ENCODE measurements at regions of chr9 and their contacts with region 1.

Region 1: DNA sequence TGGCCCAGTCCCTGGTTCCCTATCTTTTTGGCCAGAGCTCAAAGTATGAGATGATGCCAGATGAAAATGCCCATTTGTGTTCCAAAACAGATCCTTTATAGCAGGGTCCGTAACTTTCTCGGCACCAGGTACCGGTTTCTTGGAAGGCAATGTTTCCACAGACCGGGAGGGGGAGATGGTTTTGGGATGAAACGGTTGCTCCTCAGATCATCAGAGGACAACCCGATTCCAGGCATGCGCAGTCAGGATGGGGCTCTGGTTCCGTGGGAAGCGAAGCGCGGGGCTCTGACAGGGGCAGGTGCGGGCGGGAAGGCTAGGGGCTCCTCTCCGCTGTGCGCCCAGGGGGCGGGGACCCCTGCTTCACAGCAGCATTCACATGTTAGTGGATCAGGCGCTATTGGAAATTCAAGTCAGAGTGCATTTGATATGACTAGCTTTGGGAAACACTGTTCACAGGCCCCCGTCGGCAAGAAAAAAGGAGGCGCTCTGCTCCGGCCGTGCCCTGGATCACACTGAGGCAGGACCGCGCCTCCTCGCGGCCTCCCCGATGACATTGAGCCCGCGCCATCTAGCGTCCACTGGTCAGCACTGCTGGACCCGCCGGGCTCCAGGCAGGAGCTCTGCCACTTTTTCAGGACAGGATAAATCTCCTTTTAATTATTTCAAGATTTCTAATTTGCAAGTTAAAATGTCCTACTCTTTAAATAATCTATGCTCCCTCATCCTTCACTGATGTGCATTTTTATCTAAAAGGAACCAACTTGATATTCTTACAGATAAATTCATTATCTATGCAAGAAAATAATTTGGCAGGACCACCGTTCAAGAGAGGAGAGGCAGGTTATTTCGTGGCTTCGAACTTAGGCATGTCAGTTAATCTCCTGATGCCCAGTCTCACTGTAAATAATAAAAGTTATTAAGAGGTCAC is 190.0 kb downstream of the FANCC start:
- DNase-seq: peak; percentile 87
- CTCF ChIP-seq: peak; percentile 98

Region 2: GRCh38 chr9:94681508-94681907 is 446.0 kb before region 1 on chr9:
- in situ Hi-C with region 1: loop called (anchors 5 kb)
- DNase-seq: peak; percentile 74
- CTCF ChIP-seq: peak; percentile 45

Region 3: GRCh38 chr9:94783102-94783664 is 344.3 kb before region 1 on chr9:
- in situ Hi-C with region 1: loop called (anchors 10 kb)
- DNase-seq: peak; percentile 50
- CTCF ChIP-seq: peak; percentile 34